Posterior cingulate gyrus (tissue), 11 donors: ENCODE measurements at regions of chr1 and their contacts with region 1.

Region 1: GRCh38 chr1:213374369-213374768 is 323.3 kb downstream of the RPS6KC1 start:
- DNase-seq: peak; percentile 43 to 95 (median 74)

Region 2: DNA sequence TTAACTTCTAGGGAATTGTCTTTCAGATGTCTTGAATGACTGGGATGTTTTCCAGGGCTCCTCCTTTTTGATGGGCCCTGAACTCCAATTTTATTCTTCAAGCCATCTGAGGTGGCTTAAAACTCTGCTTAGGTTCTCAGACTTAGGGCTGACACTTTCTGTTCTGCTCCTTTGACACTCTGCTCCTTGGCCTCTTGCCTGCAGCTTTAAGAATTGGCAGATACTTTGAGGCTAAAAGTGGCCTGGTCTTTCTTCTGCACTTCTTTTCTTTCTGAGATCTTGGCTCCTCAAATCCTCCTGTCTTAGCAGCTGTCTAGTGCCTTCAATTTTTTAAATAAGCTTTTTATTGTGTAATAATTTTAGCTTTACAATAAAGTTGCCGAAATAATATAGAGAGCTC is 28.7 kb before region 1 on chr1:
- intact Hi-C with region 1: no loop called
- DNase-seq: no peak

Region 3: DNA sequence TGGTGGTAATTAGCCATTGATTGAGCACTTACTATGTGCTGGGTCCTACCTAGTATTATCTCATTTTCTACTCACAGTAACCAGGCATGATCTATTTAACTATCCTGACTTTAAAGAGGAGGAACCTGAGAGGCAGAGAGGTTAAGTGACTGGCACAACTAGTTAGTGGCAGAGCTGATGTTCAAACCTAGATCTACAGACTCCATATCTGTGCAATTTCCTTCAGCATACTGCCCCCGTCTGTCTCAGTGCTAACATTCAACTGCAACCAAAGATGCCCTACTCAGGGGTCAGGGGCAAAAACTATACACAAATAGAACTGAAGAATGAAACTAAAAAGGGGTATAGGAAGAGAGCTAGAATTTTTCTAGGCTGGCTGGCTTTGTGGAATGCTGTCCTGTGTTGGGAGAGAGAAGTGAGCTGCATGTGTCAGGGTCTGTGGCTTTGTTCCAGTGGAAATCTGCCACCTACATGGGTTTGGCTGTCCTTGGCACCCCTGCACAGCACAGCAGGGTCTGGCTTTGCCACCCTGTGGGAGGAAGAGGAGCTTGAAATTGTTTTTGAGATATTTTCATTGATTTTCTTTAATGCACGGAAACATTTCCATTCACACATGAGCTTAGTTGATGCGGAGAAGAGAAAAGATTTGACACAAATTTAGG is 45.1 kb after region 1 on chr1:
- intact Hi-C with region 1: no loop called
- DNase-seq: peak in 1 of 10 donors; percentile 51

Region 4: DNA sequence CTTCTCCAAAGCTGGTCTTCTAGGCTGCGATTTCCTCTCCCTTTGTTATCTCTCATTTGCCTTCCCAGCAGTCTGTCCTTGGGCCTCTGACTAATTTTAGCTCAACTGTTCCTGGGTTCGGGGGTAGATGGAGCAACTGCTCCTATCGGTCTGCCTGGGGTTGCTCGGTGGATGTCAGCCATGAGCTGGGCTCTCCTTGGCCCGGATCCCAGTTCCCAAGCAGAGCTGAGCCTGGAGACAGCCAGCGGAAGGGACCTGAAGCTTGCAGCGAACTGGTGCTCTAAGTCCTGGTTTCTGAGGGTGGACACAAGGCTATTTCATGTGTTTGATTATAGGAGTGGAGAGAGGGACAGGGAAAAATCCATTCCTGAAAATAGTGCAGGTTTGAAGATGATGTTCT is 99.7 kb after region 1 on chr1:
- intact Hi-C with region 1: no loop called
- DNase-seq: peak in 4 of 10 donors; percentile 6 to 56 (median 28)

Region 5: GRCh38 chr1:213982672-213983492 is 608.5 kb after region 1 on chr1:
- intact Hi-C with region 1: loop called (anchors 5 kb)
- DNase-seq: peak in 5 of 10 donors; percentile 62 to 92 (median 82)